CD4-positive, alpha-beta memory T cell (primary cell): ENCODE measurements at regions of chr22 and their contacts with region 1.

Region 1: DNA sequence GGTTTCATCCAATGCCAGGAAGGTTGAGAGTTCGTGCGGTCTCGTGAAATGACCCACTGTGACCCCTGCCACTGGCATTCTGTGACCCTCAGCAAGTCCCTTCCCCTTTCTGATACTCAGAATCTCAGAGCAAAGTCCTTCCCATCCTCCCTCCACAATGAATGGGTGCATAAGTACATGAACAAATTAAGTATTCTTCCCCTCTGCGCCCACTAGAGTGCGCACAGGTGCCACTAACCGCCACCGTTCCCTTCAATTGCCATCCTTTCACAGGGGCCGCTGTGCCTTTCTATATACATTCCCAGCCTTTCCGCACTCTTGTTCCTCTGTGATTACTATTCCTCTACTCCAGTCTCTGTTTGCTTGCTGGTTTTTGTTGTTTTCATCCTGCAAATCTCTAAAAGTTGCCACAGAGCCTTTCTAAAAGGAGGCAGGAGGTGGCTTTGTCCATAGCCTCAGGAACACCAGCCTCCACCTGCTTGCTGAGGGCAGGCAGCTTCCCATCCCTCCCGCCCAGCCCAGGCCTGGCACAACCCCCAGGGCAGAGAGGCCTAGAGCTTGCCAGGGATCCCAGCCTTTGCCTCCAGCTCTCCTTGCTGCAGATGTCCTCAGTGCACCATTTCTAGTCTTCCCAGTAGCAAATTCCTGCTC is 6.7 kb upstream of the AP1B1 start:
- DNase-seq: peak; percentile 50 to 65 (median 60)
- H3K4me3 ChIP-seq: no peak overlapping the region
- H3K4me3 Mint-ChIP-seq: peak overlapping the region in 1 of 8 donors; percentile 3
- H3K27ac ChIP-seq: no peak overlapping the region
- H3K27ac Mint-ChIP-seq: peak overlapping the region in 1 of 7 donors; percentile 43
- H3K4me1 ChIP-seq: peaks cover 3% of the 10 kb centered on the region
- H3K4me1 Mint-ChIP-seq: peaks cover 5 to 11% (median 6%) of the 10 kb centered on the region in 4 donors
- H3K27me3 ChIP-seq: no peaks in the 10 kb centered on the region
- H3K27me3 Mint-ChIP-seq: no peaks in the 10 kb centered on the region

Region 2: GRCh38 chr22:29205594-29206371 is 189.3 kb before region 1 on chr22 and contains the start of gene EMID1:
- CTCF ChIA-PET with region 1: no interaction called
- POLR2A ChIA-PET with region 1: no interaction called
- intact Hi-C with region 1: no loop called
- DNase-seq: peak in 2 of 5 donors; percentile 10 to 14
- H3K4me3 ChIP-seq: no peak within 1 kb of the TSS
- H3K4me3 Mint-ChIP-seq: peak within 1 kb of the TSS; percentile 25 to 80 (median 70)
- H3K27ac ChIP-seq: no peak within 1 kb of the TSS
- H3K27ac Mint-ChIP-seq: peak within 1 kb of the TSS in 1 of 7 donors; percentile 54
- H3K4me1 ChIP-seq: peaks cover 17% of the 10 kb centered on the region
- H3K4me1 Mint-ChIP-seq: peaks cover 12 to 27% (median 17%) of the 10 kb centered on the region in 4 donors
- H3K27me3 ChIP-seq: no peaks in the 10 kb centered on the region
- H3K27me3 Mint-ChIP-seq: peaks cover 12 to 27% of the 10 kb centered on the region in 2 donors
- total RNA-seq, gene EMID1: not detected

Region 3: DNA sequence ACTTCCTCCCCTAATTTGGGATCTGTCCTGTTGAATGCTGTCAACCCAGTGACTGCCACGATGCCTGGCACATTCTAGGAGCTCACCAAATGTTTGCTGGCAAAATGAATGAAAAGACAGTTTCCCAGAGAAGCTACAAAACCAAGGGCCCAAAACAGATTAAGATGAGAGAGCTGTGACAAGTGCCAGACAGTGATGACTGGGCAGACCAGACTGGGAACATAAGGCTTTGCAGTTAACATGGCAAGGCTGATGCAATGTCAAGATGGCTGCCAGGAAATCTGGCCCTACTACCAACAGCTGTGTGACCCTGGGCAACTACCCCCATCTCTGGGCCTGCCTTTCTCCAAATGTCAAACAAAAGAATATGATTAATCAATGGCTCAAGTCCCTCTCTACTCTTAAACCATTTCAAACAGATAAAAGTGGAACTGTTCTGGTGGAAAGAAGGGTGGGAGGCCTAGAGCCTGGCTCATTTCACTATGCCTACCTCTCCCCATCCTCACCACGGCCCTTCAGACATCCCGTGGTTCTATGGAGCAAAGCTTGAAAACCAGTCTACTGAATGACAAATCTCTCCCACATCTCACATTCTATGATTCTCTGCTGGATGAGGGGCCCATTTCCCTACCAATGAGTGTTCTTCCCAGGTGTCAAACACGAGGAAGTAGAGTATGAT is 19.5 kb before region 1 on chr22:
- CTCF ChIA-PET with region 1: no interaction called
- POLR2A ChIA-PET with region 1: no interaction called
- intact Hi-C with region 1: no loop called
- DNase-seq: no peak
- H3K4me3 ChIP-seq: no peak overlapping the region
- H3K4me3 Mint-ChIP-seq: no peak overlapping the region
- H3K27ac ChIP-seq: no peak overlapping the region
- H3K27ac Mint-ChIP-seq: peak overlapping the region in 3 of 7 donors; percentile 5 to 67 (median 14)
- H3K4me1 ChIP-seq: no peaks in the 10 kb centered on the region
- H3K4me1 Mint-ChIP-seq: peaks cover 18 to 35% (median 25%) of the 10 kb centered on the region in 4 donors
- H3K27me3 ChIP-seq: no peaks in the 10 kb centered on the region
- H3K27me3 Mint-ChIP-seq: no peaks in the 10 kb centered on the region

Region 4: GRCh38 chr22:29524440-29525191 is 129.6 kb after region 1 on chr22:
- CTCF ChIA-PET with region 1: interaction called, 3 read pairs
- POLR2A ChIA-PET with region 1: no interaction called
- intact Hi-C with region 1: loop called (anchors 1 kb)
- DNase-seq: peak in 4 of 5 donors; percentile 4 to 14 (median 10)
- H3K4me3 ChIP-seq: no peak overlapping the region
- H3K4me3 Mint-ChIP-seq: no peak overlapping the region
- H3K27ac ChIP-seq: no peak overlapping the region
- H3K27ac Mint-ChIP-seq: peak overlapping the region in 1 of 7 donors; percentile 15
- H3K4me1 ChIP-seq: no peaks in the 10 kb centered on the region
- H3K4me1 Mint-ChIP-seq: no peaks in the 10 kb centered on the region
- H3K27me3 ChIP-seq: no peaks in the 10 kb centered on the region
- H3K27me3 Mint-ChIP-seq: no peaks in the 10 kb centered on the region